Caco-2 (cell line): ENCODE measurements at regions of chr20 and their contacts with region 1.

Region 1: DNA sequence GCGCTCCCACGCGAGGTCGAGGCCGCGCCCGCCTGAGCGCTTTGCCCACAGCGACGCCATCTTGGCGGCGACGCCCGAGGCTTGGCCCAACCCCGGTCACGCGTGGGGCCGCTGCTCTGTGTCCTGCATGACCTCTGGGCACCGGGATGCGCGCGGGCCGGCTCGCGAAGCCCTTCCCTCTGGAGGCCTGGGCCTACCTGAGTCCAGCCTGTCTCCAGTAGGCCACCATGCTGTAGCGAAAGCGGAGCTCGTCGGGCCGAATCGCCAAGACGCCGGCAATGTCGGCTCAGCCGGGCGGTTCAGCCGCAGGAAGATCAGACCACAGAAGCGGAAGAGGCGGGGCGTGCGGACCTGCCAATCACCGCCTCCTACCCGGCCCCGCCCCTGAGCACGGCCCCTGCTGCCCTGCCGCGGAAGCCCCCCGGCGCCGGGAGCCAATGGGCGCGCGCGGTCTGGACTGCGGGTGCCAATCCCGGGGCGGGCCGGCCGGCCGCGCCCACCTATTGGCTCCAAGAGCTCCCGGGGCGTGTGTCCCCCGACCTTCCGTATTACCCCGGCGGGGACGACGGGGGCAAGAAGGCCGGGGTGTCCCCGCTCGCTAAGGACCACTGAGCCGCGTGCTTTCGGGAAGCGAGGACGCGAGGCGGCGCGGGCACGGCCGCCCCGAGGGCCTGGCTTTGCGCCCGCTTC is at the start of gene ATP5F1E:
- DNase-seq: peak; percentile 99 to 100
- H3K4me3 ChIP-seq: peak within 1 kb of the TSS; percentile 94
- H3K4me3 Mint-ChIP-seq: peak within 1 kb of the TSS; percentile 85
- H3K27ac Mint-ChIP-seq: peak within 1 kb of the TSS; percentile 90
- H3K4me1 ChIP-seq: peaks cover 21% of the 10 kb centered on the region
- H3K4me1 Mint-ChIP-seq: peaks cover 13% of the 10 kb centered on the region
- H3K27me3 ChIP-seq: no peaks in the 10 kb centered on the region
- H3K27me3 Mint-ChIP-seq: no peaks in the 10 kb centered on the region
- CTCF ChIP-seq: peak in 1 of 2 experiments; percentile 32
- total RNA-seq, gene ATP5F1E: 181 and 186 TPM in 2 replicates

Region 2: GRCh38 chr20:58870239-58871014 is 161.7 kb before region 1 on chr20:
- CTCF ChIA-PET with region 1: interaction called, 6 read pairs
- POLR2A ChIA-PET with region 1: interaction called, 10 read pairs
- intact Hi-C with region 1: loop called (anchors 5 kb)
- DNase-seq: peak; percentile 83 to 93
- H3K4me3 ChIP-seq: no peak overlapping the region
- H3K4me3 Mint-ChIP-seq: no peak overlapping the region
- H3K27ac Mint-ChIP-seq: no peak overlapping the region
- H3K4me1 ChIP-seq: no peaks in the 10 kb centered on the region
- H3K4me1 Mint-ChIP-seq: peaks cover 6% of the 10 kb centered on the region
- H3K27me3 ChIP-seq: no peaks in the 10 kb centered on the region
- H3K27me3 Mint-ChIP-seq: peaks cover 17% of the 10 kb centered on the region
- CTCF ChIP-seq: peak; percentile 98 to 100

Region 3: GRCh38 chr20:58980700-58981627 is 51.2 kb before region 1 on chr20 and contains the start of gene NELFCD:
- CTCF ChIA-PET with region 1: interaction called, 7 read pairs
- POLR2A ChIA-PET with region 1: interaction called, 21 read pairs
- intact Hi-C with region 1: loop called (anchors 1 kb)
- DNase-seq: peak; percentile 98 to 100
- H3K4me3 ChIP-seq: peak within 1 kb of the TSS; percentile 57
- H3K4me3 Mint-ChIP-seq: peak within 1 kb of the TSS; percentile 76
- H3K27ac Mint-ChIP-seq: peak within 1 kb of the TSS; percentile 51
- H3K4me1 ChIP-seq: peaks cover 12% of the 10 kb centered on the region
- H3K4me1 Mint-ChIP-seq: peaks cover 21% of the 10 kb centered on the region
- H3K27me3 ChIP-seq: no peaks in the 10 kb centered on the region
- H3K27me3 Mint-ChIP-seq: no peaks in the 10 kb centered on the region
- CTCF ChIP-seq: no peak
- total RNA-seq, gene NELFCD: 230 TPM in 2 replicates

Region 4: DNA sequence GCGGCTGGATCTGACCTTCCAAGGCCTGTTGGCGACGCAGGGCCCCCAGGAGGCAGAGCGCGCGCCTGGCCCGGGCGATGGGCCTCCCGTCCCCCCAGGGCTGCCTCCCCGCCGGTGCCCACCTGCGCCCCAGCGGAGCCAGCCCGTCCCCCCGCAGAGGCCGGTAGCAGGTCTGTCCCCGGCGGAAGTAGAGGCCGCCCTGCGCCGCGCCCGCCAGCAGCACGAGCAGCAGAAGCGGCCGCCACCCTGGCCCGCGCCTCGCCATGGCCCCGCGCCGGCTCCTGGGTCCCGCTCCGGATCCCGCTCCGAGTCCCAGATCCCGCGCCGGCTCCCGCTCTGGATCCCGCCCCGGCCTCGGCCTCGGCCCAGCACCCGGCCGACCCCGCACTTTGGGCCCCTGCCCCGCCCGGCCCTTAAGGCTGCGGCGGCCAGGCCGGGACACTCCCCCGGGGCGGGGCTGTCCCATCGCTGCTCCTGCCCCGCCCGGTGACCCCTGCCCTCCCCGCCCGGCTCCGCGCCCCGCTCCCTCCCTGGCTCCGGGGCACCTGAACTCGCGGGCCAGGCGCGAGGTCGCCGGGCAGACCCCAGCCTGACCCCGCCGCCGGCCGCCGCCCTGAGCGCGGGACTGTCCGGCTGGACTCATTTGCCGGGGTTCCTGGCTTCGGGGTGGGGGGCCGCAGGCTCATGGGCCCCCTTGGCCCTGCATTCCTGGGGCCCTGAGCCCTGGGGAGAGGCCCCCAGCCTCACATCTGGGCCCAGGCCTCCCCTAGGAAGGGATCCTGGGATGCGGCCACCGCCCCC is 25.1 kb before region 1 on chr20 and contains the start of gene CTSZ:
- CTCF ChIA-PET with region 1: interaction called, 3 read pairs
- POLR2A ChIA-PET with region 1: interaction called, 13 read pairs
- intact Hi-C with region 1: loop called (anchors 1 kb)
- DNase-seq: peak; percentile 88 to 90
- H3K4me3 ChIP-seq: peak within 1 kb of the TSS; percentile 86
- H3K4me3 Mint-ChIP-seq: peak within 1 kb of the TSS; percentile 74
- H3K27ac Mint-ChIP-seq: peak within 1 kb of the TSS; percentile 82
- H3K4me1 ChIP-seq: peaks cover 24% of the 10 kb centered on the region
- H3K4me1 Mint-ChIP-seq: peaks cover 8% of the 10 kb centered on the region
- H3K27me3 ChIP-seq: no peaks in the 10 kb centered on the region
- H3K27me3 Mint-ChIP-seq: no peaks in the 10 kb centered on the region
- CTCF ChIP-seq: no peak
- total RNA-seq, gene CTSZ: 202 and 228 TPM in 2 replicates

Region 5: DNA sequence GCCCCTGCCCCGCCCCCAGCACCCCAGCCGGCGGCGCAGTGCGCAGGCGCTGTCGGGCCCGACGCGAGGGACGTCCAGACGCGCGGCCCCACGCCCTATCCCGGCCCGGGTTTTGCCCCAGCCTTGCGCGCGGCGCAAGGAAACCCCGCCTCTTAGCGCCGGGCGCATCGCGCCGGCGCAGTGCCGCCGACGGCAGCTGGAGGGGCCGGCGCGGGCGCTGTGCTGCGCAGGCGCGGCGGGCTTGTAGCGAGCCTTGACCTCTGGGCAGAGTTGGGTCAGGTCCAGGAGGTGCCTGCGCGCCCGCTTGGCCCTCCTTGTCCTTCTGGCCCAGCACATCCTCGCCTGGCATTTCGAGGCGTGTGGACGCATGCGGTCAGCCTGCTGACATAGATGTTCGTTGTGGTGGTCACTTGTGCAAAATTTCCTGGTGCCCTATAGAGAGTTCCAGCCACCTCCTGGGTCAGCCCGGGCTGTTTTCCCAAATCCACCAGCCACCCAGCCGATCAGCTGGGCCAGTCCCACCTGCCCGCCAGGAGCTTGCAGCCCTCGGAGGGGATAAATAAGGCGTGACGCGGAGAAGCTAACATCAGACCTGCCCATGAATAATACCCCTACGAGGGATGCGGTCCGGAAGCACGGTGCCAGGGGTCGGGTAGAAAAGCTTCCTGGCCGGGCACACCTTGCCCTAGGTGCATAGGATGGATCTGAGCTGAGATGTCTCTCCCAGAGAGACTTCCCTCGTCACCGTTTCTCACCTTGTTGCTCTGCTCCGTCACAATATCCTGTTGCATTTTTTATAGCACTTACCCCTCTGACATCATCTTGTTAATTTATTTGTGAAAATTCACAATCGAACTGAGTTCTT is 10.9 kb after region 1 on chr20:
- CTCF ChIA-PET with region 1: interaction called, 8 read pairs
- POLR2A ChIA-PET with region 1: interaction called, 56 read pairs
- intact Hi-C with region 1: loop called (anchors 1 kb)
- DNase-seq: peak; percentile 97 to 100
- H3K4me3 ChIP-seq: peak overlapping the region; percentile 89
- H3K4me3 Mint-ChIP-seq: peak overlapping the region; percentile 70
- H3K27ac Mint-ChIP-seq: peak overlapping the region; percentile 80
- H3K4me1 ChIP-seq: peaks cover 50% of the 10 kb centered on the region
- H3K4me1 Mint-ChIP-seq: peaks cover 36% of the 10 kb centered on the region
- H3K27me3 ChIP-seq: no peaks in the 10 kb centered on the region
- H3K27me3 Mint-ChIP-seq: no peaks in the 10 kb centered on the region
- CTCF ChIP-seq: no peak

Region 6: DNA sequence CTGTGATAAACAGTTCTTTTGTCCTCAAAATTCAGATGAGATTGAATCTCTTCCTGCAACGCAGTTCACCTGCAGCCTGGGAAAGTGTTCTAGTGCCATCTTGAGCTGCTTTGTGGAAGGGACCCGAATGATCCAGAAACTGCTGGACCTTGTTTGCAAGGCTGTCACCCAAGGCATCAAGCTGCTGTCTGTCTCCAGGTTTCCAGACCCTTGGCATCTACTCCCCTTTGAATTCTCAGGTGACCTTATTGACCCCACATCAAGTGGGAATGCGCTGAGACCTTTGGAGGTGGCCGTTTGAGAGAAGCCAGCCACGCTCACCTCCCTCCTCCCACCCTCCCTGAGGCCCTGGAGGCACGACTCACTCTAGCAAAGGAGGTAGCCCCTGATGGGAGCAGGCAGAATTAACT is 380.7 kb after region 1 on chr20:
- CTCF ChIA-PET with region 1: no interaction called
- POLR2A ChIA-PET with region 1: no interaction called
- intact Hi-C with region 1: no loop called
- DNase-seq: peak; percentile 59 to 72
- H3K4me3 ChIP-seq: no peak overlapping the region
- H3K4me3 Mint-ChIP-seq: no peak overlapping the region
- H3K27ac Mint-ChIP-seq: peak overlapping the region; percentile 9
- H3K4me1 ChIP-seq: no peaks in the 10 kb centered on the region
- H3K4me1 Mint-ChIP-seq: no peaks in the 10 kb centered on the region
- H3K27me3 ChIP-seq: peaks cover 2% of the 10 kb centered on the region; the same call in 1 of the 2 replicates
- H3K27me3 Mint-ChIP-seq: peaks cover 37% of the 10 kb centered on the region
- CTCF ChIP-seq: peak; percentile 38 to 65

Region 7: DNA sequence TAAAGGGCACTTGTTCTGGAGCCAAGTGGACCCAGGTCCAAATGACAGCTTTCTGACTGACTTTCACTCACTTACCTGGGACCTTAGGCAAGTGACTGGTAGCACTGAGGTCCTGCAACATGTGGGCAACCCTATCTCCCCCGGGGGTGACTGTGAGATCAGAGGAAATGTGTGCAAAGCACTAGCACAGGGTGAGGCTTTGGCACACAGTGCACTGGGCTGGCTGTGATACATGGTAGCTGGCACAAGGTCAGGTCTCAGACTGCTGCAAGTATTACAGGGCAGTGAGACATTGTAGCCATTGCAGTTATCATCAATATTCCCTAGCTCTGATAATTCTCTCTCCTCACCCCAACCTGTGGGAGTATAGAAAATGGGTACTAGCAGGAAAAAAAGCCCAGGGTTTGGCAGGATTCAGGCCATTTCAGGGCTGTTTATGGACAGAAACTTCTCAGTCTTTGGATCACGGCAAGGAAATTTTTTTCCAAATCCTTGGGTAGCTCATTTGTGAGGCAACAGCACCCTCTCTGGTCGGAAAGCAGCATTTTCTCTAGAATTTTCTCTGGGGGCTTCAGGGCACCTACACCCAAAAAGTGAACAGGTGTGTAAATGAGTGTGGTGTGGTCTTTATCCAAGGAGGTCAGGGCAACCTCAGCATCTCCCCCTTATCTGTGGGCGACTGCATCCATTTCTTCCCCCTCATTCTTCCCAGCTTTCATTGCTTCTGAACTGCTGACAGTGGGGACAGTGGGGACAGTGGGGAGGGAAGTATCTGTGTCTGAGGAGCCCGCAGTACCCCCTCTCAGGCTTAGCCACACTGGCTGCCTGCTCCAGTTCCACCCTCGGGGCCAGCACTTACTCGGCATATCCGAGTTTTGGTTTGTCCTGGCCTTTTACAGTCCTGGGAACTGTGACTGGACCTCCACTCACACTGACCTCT is 423.5 kb after region 1 on chr20:
- CTCF ChIA-PET with region 1: interaction called, 11 read pairs
- POLR2A ChIA-PET with region 1: no interaction called
- intact Hi-C with region 1: no loop called
- DNase-seq: peak in 1 of 2 experiments; percentile 52
- H3K4me3 ChIP-seq: no peak overlapping the region
- H3K4me3 Mint-ChIP-seq: no peak overlapping the region
- H3K27ac Mint-ChIP-seq: no peak overlapping the region
- H3K4me1 ChIP-seq: peaks cover 10% of the 10 kb centered on the region; the same call in 1 of the 2 replicates
- H3K4me1 Mint-ChIP-seq: no peaks in the 10 kb centered on the region
- H3K27me3 ChIP-seq: no peaks in the 10 kb centered on the region
- H3K27me3 Mint-ChIP-seq: peaks cover 17% of the 10 kb centered on the region
- CTCF ChIP-seq: peak; percentile 86 to 91